ENCODE measurements at regions of chr5 and their contacts with region 1.

Region 1: DNA sequence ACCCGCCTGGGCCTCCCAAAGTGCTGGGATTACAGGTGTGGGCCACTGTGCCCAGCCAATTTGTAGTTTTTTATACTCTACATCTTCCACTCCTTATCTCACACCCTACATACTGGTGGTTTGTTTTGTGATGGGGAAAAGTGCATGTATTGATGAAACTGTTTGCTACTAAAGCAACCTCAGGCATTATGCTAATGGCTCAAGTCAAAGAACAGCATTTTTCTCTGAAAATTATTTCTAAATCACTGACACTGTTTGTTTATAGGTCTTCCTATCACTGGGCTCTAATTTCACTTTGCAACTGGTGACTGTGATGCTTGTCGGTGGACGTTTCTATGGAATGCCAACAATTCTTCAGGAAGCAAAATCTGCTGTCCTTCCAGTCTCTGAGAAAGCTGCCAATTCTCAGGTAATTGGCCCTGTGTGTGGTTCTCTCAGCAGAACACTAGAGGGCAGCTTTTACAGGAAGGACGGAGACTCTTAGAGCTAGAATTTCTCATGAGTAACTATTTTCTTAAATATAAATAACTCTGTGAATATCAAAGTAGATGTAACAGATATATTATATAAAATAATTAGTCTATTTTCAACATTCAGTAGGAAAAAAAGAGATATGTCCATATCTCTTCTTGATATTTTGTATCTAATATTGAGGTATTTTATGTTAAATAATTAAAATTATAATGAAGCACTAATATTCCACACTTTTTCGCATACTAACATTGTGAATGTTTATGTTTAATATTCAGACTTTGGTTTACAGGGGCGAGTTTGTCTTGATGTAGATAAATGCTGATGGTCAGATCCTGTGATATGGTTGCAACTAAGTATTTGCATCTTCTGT is 244.1 kb downstream of the ADGRV1 start:
- DNase-seq: peak; percentile 53 to 54
- H3K4me3 ChIP-seq: no peak overlapping the region
- H3K4me3 Mint-ChIP-seq: no peak overlapping the region
- H3K27ac Mint-ChIP-seq: no peak overlapping the region
- H3K4me1 ChIP-seq: no peaks in the 10 kb centered on the region
- H3K4me1 Mint-ChIP-seq: no peaks in the 10 kb centered on the region
- H3K27me3 ChIP-seq: no peaks in the 10 kb centered on the region
- H3K27me3 Mint-ChIP-seq: no peaks in the 10 kb centered on the region
- CTCF ChIP-seq: peak; percentile 75 to 86

Region 2: GRCh38 chr5:90696153-90696552 is 106.5 kb before region 1 on chr5:
- CTCF ChIA-PET with region 1: no interaction called
- POLR2A ChIA-PET with region 1: no interaction called
- intact Hi-C with region 1: no loop called
- DNase-seq: no peak
- H3K4me3 ChIP-seq: no peak overlapping the region
- H3K4me3 Mint-ChIP-seq: no peak overlapping the region
- H3K27ac Mint-ChIP-seq: no peak overlapping the region
- H3K4me1 ChIP-seq: no peaks in the 10 kb centered on the region
- H3K4me1 Mint-ChIP-seq: no peaks in the 10 kb centered on the region
- H3K27me3 ChIP-seq: no peaks in the 10 kb centered on the region
- H3K27me3 Mint-ChIP-seq: peaks cover 4% of the 10 kb centered on the region
- CTCF ChIP-seq: no peak

Region 3: DNA sequence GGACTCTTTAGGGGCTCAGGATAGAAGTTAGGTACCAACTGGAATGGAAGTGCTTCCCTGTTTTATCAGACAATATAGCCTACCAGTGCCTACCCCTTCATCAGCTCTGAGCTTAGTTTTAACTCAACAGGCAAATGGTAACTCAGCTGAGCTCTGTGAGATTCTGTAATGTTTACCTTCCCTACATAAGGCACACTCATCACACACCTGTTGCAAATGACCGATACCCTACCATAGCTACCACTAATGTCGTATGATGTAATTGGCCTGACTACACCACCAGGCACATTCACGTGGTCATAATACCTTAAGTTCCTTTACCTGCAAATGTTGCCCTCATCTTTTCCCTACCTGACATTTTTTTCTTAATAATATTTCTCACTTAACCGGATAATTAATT is 10.7 kb after region 1 on chr5:
- CTCF ChIA-PET with region 1: no interaction called
- POLR2A ChIA-PET with region 1: no interaction called
- intact Hi-C with region 1: no loop called
- DNase-seq: no peak
- H3K4me3 ChIP-seq: no peak overlapping the region
- H3K4me3 Mint-ChIP-seq: no peak overlapping the region
- H3K27ac Mint-ChIP-seq: no peak overlapping the region
- H3K4me1 ChIP-seq: no peaks in the 10 kb centered on the region
- H3K4me1 Mint-ChIP-seq: no peaks in the 10 kb centered on the region
- H3K27me3 ChIP-seq: no peaks in the 10 kb centered on the region
- H3K27me3 Mint-ChIP-seq: no peaks in the 10 kb centered on the region
- CTCF ChIP-seq: no peak

Region 4: DNA sequence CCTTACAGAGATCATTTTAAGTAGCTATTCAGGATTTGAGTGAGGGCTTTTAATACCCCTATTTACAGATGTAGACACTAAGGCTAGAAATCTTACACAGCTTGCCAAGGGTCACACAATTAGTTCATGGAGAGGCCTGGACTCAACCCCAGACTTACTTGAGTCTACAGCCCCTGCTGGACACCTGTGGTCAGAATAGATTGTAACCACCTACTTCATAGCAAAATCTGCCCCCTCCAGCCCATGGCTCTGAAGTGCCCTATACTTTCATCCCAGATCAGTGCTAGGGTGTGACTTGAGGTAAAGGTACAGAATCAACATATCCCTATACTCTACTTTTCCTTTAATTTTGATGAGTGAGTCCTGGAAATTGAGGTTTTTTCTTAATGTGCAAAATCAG is 47.2 kb after region 1 on chr5:
- CTCF ChIA-PET with region 1: interaction called, 3 read pairs
- POLR2A ChIA-PET with region 1: no interaction called
- intact Hi-C with region 1: loop called (anchors 1 kb)
- DNase-seq: no peak
- H3K4me3 ChIP-seq: no peak overlapping the region
- H3K4me3 Mint-ChIP-seq: no peak overlapping the region
- H3K27ac Mint-ChIP-seq: no peak overlapping the region
- H3K4me1 ChIP-seq: no peaks in the 10 kb centered on the region
- H3K4me1 Mint-ChIP-seq: no peaks in the 10 kb centered on the region
- H3K27me3 ChIP-seq: no peaks in the 10 kb centered on the region
- H3K27me3 Mint-ChIP-seq: no peaks in the 10 kb centered on the region
- CTCF ChIP-seq: peak in 1 of 2 experiments; percentile 25

Region 5: DNA sequence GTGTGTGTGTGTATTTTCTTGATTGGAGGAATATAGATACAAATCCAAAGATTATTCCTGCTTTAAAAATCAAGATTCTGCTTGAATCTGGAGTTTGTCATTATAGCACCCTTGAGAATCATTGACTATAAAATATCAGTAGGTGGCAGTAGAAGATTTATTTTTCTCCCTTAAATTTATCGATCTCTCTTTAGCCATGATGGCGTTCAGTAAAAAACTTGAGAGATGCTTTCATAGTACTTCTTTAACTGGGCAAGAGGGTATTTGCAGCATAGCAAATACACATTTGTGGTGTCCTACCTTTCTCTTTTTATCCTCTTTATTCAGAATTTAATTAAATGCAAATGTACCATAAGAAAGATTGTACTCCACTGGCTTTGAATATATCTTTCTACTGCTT is 63.6 kb after region 1 on chr5:
- CTCF ChIA-PET with region 1: no interaction called
- POLR2A ChIA-PET with region 1: no interaction called
- intact Hi-C with region 1: no loop called
- DNase-seq: no peak
- H3K4me3 ChIP-seq: no peak overlapping the region
- H3K4me3 Mint-ChIP-seq: no peak overlapping the region
- H3K27ac Mint-ChIP-seq: no peak overlapping the region
- H3K4me1 ChIP-seq: peaks cover 25% of the 10 kb centered on the region
- H3K4me1 Mint-ChIP-seq: peaks cover 14% of the 10 kb centered on the region
- H3K27me3 ChIP-seq: no peaks in the 10 kb centered on the region
- H3K27me3 Mint-ChIP-seq: no peaks in the 10 kb centered on the region
- CTCF ChIP-seq: peak; percentile 34 to 42

Measured in Caco-2 (cell line).